ENCODE measurements at regions of chr9 and their contacts with region 1.

Region 1: DNA sequence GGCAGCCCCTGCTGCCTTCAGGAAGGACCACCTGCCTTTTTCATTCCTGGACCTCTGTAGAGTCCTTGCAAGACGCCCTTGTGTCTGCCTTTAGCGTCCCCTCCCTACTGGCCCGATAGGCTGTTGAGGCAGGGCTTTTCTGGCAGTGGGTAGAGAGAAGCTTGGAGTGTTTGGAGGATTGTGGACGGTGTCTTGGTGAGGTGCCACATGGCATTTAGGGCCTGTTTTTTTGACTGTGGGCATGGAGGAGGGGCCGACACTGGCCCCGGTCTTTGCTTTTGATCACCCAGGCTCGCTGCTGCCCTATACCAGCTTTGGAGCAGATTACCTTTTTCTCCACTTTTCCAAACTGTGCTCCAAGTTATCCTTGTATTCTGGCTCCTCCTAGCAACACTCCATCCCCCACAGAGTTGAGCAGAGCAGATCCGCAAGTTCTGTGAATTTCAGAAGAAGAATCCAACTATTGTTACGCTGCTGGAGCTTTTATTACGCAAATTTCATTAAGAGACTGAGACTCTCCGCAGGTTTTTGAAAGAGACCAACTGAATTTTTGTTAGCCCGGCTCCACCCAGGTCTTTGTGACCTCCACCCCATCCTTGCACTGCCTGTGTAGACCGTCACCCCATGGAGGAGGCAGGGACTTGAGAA is 34.8 kb upstream of the PRDM12 start:
- DNase-seq: no peak
- H3K4me3 ChIP-seq: no peak overlapping the region
- H3K27ac ChIP-seq: no peak overlapping the region
- H3K4me1 ChIP-seq: no peaks in the 10 kb centered on the region
- H3K27me3 ChIP-seq: no peaks in the 10 kb centered on the region
- CTCF ChIP-seq: no peak
- POLR2A ChIP-seq: no peak

Region 2: GRCh38 chr9:130578865-130579737 is 50.5 kb before region 1 on chr9 and contains the start of gene FUBP3:
- intact Hi-C with region 1: no loop called
- DNase-seq: peak in 1 of 2 donors; percentile 91
- H3K4me3 ChIP-seq: peak within 1 kb of the TSS; percentile 82 to 92
- H3K27ac ChIP-seq: peak within 1 kb of the TSS; percentile 90
- H3K4me1 ChIP-seq: peaks cover 42% of the 10 kb centered on the region
- H3K27me3 ChIP-seq: no peaks in the 10 kb centered on the region
- CTCF ChIP-seq: no peak
- POLR2A ChIP-seq: peak in 1 of 2 donors; percentile 50
- total RNA-seq, gene FUBP3: 33.6 TPM

Region 3: GRCh38 chr9:130672466-130672865 is 42.9 kb after region 1 on chr9:
- intact Hi-C with region 1: loop called (anchors 2 kb)
- DNase-seq: no peak
- H3K4me3 ChIP-seq: no peak overlapping the region
- H3K27ac ChIP-seq: no peak overlapping the region
- H3K4me1 ChIP-seq: no peaks in the 10 kb centered on the region
- H3K27me3 ChIP-seq: no peaks in the 10 kb centered on the region
- CTCF ChIP-seq: no peak
- POLR2A ChIP-seq: no peak

Measured in vagina (tissue), 2 donors.